ENCODE measurements at regions of chr2 and their contacts with region 1.

Region 1: DNA sequence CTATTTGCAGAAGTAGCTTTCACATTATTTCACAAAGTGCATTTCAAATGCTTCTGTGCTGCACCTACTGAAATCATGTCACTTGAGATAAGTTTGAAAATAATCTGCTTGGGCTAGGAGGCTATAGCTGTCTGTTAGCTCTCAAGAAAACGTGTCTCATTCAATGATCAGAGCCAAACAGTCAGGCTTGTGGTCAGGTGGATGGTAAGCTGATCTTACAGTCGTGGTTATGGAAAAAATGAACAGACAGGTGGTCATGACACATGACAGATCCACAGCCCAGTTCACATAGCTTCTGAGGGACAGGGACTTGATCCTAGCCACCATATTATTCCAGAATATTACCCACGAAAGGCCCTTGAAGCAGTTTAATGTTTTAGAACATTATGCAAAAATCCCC is 26.5 kb upstream of the RFX8 start:
- DNase-seq: no peak
- ATAC-seq: peak in 3 of 4 donors; percentile 33 to 39 (median 34)
- H3K4me3 ChIP-seq: peak overlapping the region in 2 of 12 donors; percentile 13 to 32
- H3K27ac ChIP-seq: peak overlapping the region in 7 of 12 donors; percentile 12 to 74 (median 55)
- H3K4me1 ChIP-seq: peaks cover 0 to 23% (median 11%) of the 10 kb centered on the region in 12 donors
- H3K27me3 ChIP-seq: no peaks in the 10 kb centered on the region
- CTCF ChIP-seq: no peak
- POLR2A ChIP-seq: no peak

Region 2: DNA sequence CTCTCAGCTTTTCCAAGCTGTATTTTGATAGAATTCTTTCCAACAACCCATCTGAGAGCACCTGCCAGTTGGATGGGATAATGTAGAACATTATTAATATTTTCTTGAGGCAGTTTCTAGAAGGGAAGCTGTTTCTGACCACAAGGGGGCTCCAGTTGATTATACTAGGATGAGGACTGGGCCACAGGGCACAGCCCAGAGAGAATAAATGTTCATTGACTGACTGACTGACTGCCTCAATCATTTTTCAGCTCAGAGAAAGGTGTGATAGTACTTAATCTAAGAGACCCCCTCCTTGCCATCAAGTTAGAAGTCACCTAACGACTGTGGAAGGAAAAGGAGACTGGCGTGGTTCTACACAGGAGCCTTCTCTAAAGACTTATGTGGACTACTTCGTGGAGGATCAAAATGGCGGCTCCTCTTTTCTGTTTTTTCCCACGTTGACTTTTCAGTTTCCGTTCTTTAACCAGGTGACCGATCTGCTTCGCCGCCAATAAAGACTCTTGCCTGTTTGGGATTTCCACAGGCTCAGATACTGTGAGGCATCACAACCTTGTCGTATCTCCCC is 82.3 kb before region 1 on chr2:
- intact Hi-C with region 1: loop called in 1 of 10 experiments (anchors 5 kb)
- DNase-seq: peak in 4 of 5 donors; percentile 47 to 68 (median 62)
- ATAC-seq: peak; percentile 55 to 89 (median 76)
- H3K4me3 ChIP-seq: no peak overlapping the region
- H3K27ac ChIP-seq: no peak overlapping the region
- H3K4me1 ChIP-seq: peaks cover 0 to 4% (median 0%) of the 10 kb centered on the region in 12 donors
- H3K27me3 ChIP-seq: no peaks in the 10 kb centered on the region
- CTCF ChIP-seq: peak; percentile 66 to 90 (median 83)
- POLR2A ChIP-seq: no peak

Region 3: GRCh38 chr2:101428422-101429176 is 72.8 kb before region 1 on chr2:
- intact Hi-C with region 1: loop called in 2 of 10 experiments (anchors 5 to 10 kb)
- DNase-seq: no peak
- ATAC-seq: peak; percentile 24 to 73 (median 53)
- H3K4me3 ChIP-seq: no peak overlapping the region
- H3K27ac ChIP-seq: peak overlapping the region in 1 of 12 donors; percentile 18
- H3K4me1 ChIP-seq: peaks cover 0 to 12% (median 4%) of the 10 kb centered on the region in 12 donors
- H3K27me3 ChIP-seq: no peaks in the 10 kb centered on the region
- CTCF ChIP-seq: no peak
- POLR2A ChIP-seq: no peak

Region 4: GRCh38 chr2:101435001-101435862 is 66.2 kb before region 1 on chr2:
- intact Hi-C with region 1: loop called in 1 of 10 experiments (anchors 10 kb)
- DNase-seq: peak in 2 of 5 donors; percentile 49 to 51
- ATAC-seq: peak; percentile 33 to 56 (median 52)
- H3K4me3 ChIP-seq: peak overlapping the region in 9 of 12 donors; percentile 4 to 43 (median 27)
- H3K27ac ChIP-seq: peak overlapping the region in 5 of 12 donors; percentile 3 to 47 (median 11)
- H3K4me1 ChIP-seq: peaks cover 0 to 28% (median 6%) of the 10 kb centered on the region in 12 donors
- H3K27me3 ChIP-seq: no peaks in the 10 kb centered on the region
- CTCF ChIP-seq: no peak
- POLR2A ChIP-seq: no peak

Measured in heart left ventricle (tissue), 16 donors.